CD4-positive, alpha-beta memory T cell (primary cell): ENCODE measurements at regions of chr6 and their contacts with region 1.

Region 1: DNA sequence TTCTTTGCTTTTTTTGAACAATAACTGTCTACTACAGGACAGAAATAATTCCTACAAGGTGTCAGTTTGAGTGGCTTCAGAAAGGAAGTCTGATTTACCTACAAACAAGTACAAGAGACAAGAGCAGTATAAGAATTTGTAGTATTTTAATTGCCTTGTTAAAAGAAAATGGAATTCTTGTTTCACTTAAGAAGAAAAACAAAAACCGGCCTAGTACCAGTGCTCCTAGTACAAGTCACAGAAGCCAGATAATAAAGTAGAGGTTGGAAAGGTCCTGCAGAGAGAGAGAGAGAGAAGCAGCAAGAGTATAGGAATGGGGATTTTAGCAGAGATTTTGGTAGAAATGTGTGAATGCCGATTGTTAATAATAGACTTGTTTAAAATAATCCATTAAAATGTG is 6.4 kb downstream of the TAB2 start:
- DNase-seq: no peak
- H3K4me3 ChIP-seq: no peak overlapping the region
- H3K4me3 Mint-ChIP-seq: peak overlapping the region; percentile 49 to 79 (median 70)
- H3K27ac ChIP-seq: peak overlapping the region; percentile 54
- H3K27ac Mint-ChIP-seq: peak overlapping the region; percentile 32 to 93 (median 85)
- H3K4me1 ChIP-seq: peaks cover 95% of the 10 kb centered on the region
- H3K4me1 Mint-ChIP-seq: peaks cover 48 to 94% (median 73%) of the 10 kb centered on the region in 4 donors
- H3K27me3 ChIP-seq: no peaks in the 10 kb centered on the region
- H3K27me3 Mint-ChIP-seq: no peaks in the 10 kb centered on the region

Region 2: DNA sequence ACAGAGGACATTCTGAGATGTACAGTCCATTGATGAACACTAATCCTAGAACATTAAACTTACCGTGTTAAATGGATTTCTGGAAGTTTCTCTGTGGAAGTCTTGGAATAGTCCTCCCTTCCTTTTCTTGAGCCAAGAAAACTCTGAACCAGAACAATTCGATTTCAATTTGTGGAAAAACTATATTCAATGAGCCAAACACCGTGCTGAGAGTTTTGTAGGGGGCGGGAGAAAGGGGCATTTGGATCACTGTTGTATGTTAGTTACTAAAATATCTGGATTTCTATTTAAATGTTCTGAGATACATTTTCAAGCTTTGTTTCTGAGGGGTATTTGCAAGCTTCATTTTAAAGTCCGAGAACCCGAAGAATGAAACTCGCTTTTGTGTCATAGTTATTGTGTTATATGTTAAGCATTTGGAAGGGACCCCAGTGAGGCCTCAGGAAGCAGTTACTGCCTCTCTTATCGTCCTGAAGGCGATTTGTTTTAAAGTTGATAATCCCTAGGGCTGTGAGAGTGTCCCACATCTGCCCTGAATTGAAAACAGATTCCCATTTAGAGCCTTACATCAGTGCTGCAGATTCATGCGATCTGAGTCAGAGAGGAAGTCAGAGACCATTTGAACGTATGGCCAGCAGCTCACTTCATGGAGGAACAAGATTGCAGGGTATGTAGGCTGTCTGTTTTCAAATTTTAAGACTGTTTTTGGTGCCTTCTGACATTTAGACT is 1052.0 kb before region 1 on chr6:
- CTCF ChIA-PET with region 1: no interaction called
- POLR2A ChIA-PET with region 1: no interaction called
- intact Hi-C with region 1: no loop called
- DNase-seq: no peak
- H3K4me3 ChIP-seq: no peak overlapping the region
- H3K4me3 Mint-ChIP-seq: no peak overlapping the region
- H3K27ac ChIP-seq: no peak overlapping the region
- H3K27ac Mint-ChIP-seq: no peak overlapping the region
- H3K4me1 ChIP-seq: no peaks in the 10 kb centered on the region
- H3K4me1 Mint-ChIP-seq: no peaks in the 10 kb centered on the region
- H3K27me3 ChIP-seq: no peaks in the 10 kb centered on the region
- H3K27me3 Mint-ChIP-seq: peaks cover 5 to 17% of the 10 kb centered on the region in 2 donors

Region 3: GRCh38 chr6:149208134-149208601 is 115.8 kb before region 1 on chr6:
- CTCF ChIA-PET with region 1: no interaction called
- POLR2A ChIA-PET with region 1: no interaction called
- intact Hi-C with region 1: no loop called
- DNase-seq: no peak
- H3K4me3 ChIP-seq: no peak overlapping the region
- H3K4me3 Mint-ChIP-seq: no peak overlapping the region
- H3K27ac ChIP-seq: no peak overlapping the region
- H3K27ac Mint-ChIP-seq: peak overlapping the region in 1 of 7 donors; percentile 72
- H3K4me1 ChIP-seq: peaks cover 43% of the 10 kb centered on the region
- H3K4me1 Mint-ChIP-seq: peaks cover 0 to 30% (median 16%) of the 10 kb centered on the region in 4 donors
- H3K27me3 ChIP-seq: no peaks in the 10 kb centered on the region
- H3K27me3 Mint-ChIP-seq: no peaks in the 10 kb centered on the region

Region 4: GRCh38 chr6:149293244-149293643 is 30.7 kb before region 1 on chr6:
- CTCF ChIA-PET with region 1: no interaction called
- POLR2A ChIA-PET with region 1: no interaction called
- intact Hi-C with region 1: no loop called
- DNase-seq: no peak
- H3K4me3 ChIP-seq: no peak overlapping the region
- H3K4me3 Mint-ChIP-seq: no peak overlapping the region
- H3K27ac ChIP-seq: no peak overlapping the region
- H3K27ac Mint-ChIP-seq: no peak overlapping the region
- H3K4me1 ChIP-seq: no peaks in the 10 kb centered on the region
- H3K4me1 Mint-ChIP-seq: peaks cover 0 to 1% (median 0%) of the 10 kb centered on the region in 4 donors
- H3K27me3 ChIP-seq: no peaks in the 10 kb centered on the region
- H3K27me3 Mint-ChIP-seq: no peaks in the 10 kb centered on the region

Region 5: DNA sequence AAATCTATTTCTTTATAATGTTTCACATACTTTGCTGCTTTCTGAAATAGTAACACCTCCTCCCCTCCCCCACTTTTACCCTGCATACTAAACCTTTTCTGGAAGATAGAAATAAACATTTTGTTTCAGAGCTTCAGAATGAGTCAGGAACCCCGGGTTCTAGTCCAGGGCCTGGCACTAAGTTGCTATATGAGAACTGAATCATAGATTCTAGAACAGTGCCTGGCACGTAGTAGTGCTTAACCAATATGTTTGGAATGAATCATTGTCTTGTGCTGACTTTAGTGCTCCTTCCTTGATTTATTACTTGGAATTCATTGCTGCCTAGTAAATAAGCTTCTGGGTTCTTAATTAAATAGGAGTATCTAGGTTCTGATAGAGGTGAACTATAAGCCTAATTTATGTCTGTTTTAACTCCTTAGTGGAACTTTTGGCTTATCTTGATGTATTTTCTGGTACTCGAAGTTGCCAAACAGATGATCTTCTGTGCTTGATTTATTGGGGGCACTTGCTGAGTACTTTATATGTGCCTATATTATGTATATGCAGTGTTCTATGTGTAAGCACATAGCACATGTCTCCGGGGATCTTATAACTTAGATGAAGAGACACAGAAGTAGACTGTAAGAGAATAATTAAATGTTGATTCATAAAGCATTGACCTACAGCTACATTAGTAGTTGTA is 12.1 kb after region 1 on chr6:
- CTCF ChIA-PET with region 1: interaction called, 5 read pairs
- POLR2A ChIA-PET with region 1: interaction called, 5 read pairs
- intact Hi-C with region 1: loop called (anchors 1 kb)
- DNase-seq: no peak
- H3K4me3 ChIP-seq: no peak overlapping the region
- H3K4me3 Mint-ChIP-seq: peak overlapping the region; percentile 7 to 72 (median 63)
- H3K27ac ChIP-seq: peak overlapping the region; percentile 15
- H3K27ac Mint-ChIP-seq: peak overlapping the region; percentile 26 to 64 (median 60)
- H3K4me1 ChIP-seq: peaks cover 93% of the 10 kb centered on the region
- H3K4me1 Mint-ChIP-seq: peaks cover 69 to 90% (median 77%) of the 10 kb centered on the region in 4 donors
- H3K27me3 ChIP-seq: no peaks in the 10 kb centered on the region
- H3K27me3 Mint-ChIP-seq: no peaks in the 10 kb centered on the region